Vagina (tissue), 2 donors: ENCODE measurements at regions of chr2 and their contacts with region 1.

Region 1: DNA sequence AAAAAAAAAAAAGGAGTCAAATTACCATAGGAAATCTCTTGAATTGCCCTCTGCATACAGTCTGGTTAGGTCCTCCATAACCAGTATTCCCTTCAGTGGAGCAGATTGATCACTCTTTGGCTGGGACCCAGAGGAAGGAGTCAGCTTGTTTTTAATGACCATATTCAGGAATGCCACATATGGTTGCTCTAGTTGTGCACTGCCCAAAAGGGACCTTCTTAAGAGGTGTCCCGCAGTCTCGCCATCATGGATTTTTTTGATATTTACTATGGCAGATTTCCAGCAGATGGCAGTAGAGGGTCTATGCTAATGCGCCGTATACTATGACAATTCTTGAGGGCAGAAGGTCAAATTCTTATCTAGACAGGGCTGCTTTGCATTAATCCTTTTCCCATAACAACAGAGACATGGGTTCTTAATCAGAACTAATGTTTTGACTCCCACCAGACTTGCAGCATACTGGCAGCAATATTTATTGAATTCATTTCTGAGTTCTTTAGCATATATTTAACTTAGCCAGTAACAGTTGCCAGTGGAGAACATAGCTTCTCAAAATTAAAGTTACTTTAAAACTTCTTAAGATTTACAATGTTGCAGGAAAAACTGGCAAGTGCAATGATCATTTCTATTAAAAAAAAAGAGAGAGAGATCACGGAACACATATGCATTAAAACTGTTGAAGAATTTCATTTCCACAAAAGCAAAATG is 31.8 kb upstream of the INPP4A start:
- DNase-seq: no peak
- H3K4me3 ChIP-seq: no peak overlapping the region
- H3K27ac ChIP-seq: no peak overlapping the region
- H3K4me1 ChIP-seq: no peaks in the 10 kb centered on the region
- H3K27me3 ChIP-seq: no peaks in the 10 kb centered on the region
- CTCF ChIP-seq: peak in 2 of 3 experiments; percentile 57 to 68
- POLR2A ChIP-seq: no peak

Region 2: DNA sequence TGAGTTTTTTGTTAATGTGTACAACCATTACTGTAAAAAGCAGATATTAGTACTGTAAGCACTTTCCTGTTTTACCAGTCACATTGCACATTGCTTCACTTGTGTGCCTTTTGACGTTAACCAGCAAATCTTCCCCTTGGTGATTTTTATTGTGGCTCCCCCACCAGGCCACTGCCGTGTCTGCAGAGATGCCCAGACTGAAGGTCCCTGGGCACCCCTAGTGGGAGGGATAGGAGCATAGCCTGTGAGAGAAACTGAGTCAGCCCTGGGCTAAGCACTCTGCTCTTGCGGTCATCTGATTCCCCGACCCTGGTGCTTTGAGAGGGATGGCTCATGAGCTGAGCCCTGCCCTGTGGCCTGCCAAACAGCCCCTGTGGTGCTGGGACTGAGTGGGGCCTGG is 105.2 kb after region 1 on chr2:
- intact Hi-C with region 1: no loop called
- DNase-seq: no peak
- H3K4me3 ChIP-seq: no peak overlapping the region
- H3K27ac ChIP-seq: no peak overlapping the region
- H3K4me1 ChIP-seq: peaks cover 27% of the 10 kb centered on the region
- H3K27me3 ChIP-seq: no peaks in the 10 kb centered on the region
- CTCF ChIP-seq: peak in 1 of 3 experiments; percentile 38
- POLR2A ChIP-seq: no peak

Region 3: GRCh38 chr2:98608116-98608999 is 195.5 kb after region 1 on chr2 and contains the starts of genes COA5 and UNC50:
- intact Hi-C with region 1: loop called (anchors 10 kb)
- DNase-seq: no peak
- H3K4me3 ChIP-seq: peak within 1 kb of the TSS; percentile 64 to 78
- H3K27ac ChIP-seq: peak within 1 kb of the TSS; percentile 89
- H3K4me1 ChIP-seq: peaks cover 67% of the 10 kb centered on the region
- H3K27me3 ChIP-seq: no peaks in the 10 kb centered on the region
- CTCF ChIP-seq: no peak
- POLR2A ChIP-seq: peak in 1 of 2 donors; percentile 61
- total RNA-seq, gene COA5: 24.1 TPM
- total RNA-seq, gene UNC50: 25.8 TPM

Region 4: DNA sequence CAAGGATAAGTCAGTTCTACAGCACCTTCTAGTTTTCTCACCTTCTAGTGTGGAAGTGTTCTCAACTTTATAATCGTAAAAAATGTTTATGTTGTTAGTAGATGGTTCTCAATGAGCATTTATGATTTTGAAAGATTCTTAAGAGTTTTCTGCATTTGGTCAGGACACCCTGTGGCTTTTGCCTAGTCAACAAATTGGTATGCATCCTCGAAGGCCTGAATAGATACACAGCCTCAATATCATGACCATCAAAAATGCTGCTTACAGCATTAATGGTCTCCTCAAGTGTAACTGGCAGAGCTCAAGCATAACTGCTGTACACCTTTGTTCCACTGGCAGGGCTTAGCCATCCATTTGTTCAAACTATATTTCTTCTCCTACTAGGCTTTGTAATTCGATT is 426.4 kb after region 1 on chr2:
- intact Hi-C with region 1: no loop called
- DNase-seq: no peak
- H3K4me3 ChIP-seq: no peak overlapping the region
- H3K27ac ChIP-seq: no peak overlapping the region
- H3K4me1 ChIP-seq: no peaks in the 10 kb centered on the region
- H3K27me3 ChIP-seq: no peaks in the 10 kb centered on the region
- CTCF ChIP-seq: no peak
- POLR2A ChIP-seq: no peak